Activated naive CD4-positive, alpha-beta T cell treated with anti-CD3 and anti-CD28 coated beads, Interleukin-2, amount 10 ng/mL, durations not matched to agents 7 days and 5 days (primary cell): ENCODE measurements at regions of chr2 and their contacts with region 1.

Region 1: DNA sequence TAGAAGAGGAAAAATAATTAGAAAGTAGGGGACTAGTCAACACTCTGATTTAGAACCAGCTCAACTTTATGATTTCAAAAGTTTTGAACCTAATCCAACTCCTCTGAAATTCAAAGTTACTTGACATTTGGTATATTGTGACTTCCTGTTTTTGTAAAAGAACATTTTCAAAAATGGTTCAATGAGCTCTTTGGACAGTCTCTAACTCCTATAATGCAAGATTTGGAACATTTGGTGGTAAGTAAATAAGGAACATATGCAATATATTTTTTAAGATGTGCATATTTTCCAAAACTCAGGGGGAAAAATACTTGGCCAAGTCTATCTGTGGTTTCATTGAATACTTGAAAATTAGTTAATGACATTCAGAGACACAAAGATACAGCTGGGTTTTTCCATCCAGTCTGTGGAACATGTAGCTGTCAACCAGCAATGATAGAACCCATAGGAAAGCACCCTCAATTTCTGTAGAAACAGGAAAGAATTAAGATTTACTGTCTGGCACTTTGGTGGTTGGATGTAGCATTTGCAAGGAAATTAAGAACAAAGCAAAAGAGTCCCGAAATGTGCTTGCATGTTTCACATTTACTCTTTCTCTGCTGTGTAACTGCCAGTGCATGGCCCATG is 17.0 kb upstream of the ANKRD44 start:
- DNase-seq: no peak
- H3K4me3 Mint-ChIP-seq: no peak overlapping the region
- H3K27ac Mint-ChIP-seq: peak overlapping the region; percentile 86
- H3K4me1 Mint-ChIP-seq: peaks cover 54% of the 10 kb centered on the region
- H3K27me3 Mint-ChIP-seq: no peaks in the 10 kb centered on the region

Region 2: DNA sequence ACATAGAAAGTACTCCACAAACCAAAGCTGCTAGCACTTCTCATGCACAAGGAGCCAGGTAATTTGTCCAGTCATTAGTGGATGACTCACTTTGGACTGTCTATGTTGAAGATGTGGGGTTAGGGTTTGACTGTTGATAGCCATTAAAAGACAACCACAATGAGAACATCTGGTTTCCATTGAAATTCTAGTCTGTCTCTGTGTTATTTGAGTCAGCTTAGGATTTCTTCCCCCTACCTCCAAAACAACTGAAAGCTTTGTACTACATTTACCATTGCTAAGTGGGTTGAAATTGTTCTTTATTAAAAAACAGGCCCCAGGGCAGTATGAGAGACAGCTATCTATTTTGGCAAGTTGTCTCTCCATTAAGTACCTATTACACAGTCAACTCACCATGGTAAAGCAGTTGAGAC is 33.2 kb after region 1 on chr2:
- CTCF ChIA-PET with region 1: interaction called, 17 read pairs
- DNase-seq: no peak
- H3K4me3 Mint-ChIP-seq: no peak overlapping the region
- H3K27ac Mint-ChIP-seq: no peak overlapping the region
- H3K4me1 Mint-ChIP-seq: peaks cover 17% of the 10 kb centered on the region
- H3K27me3 Mint-ChIP-seq: no peaks in the 10 kb centered on the region

Region 3: DNA sequence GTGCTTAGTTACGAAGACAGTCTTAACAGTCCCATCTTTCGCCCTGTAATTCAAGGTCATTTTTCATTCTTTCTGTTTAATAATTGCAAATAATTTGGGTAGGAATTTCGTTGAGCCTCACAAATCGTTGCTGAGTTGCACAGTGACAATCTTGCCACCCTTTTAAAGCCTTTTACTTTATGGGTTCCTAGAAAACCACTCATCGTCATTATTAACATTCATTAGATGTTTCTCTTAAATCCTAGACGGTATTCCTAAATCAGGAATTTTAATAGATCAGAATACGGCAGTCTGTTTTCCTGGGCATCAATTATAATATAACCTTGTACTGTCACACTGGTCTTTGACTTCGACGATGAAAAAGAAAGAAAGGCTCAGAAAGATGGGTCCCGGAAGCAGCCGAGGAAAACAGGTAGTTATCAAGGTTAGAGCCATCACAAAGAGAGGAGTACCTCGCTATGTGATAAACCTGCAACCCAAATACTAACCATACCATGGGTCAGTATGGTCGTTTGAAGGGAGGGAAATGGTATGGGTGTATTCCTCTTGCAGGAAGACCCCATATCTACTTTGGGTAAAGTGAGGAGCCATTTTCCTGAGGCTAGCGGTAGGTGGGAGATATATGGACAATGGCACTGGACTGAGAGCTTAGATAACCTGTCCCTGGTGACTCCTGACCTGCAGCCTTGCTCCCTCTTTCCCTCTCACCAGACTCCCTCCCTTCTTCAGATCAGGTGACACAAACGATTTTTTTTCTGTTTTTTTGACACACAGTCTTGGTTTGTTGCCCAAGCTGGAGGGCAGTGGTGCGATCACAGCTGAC is 108.2 kb after region 1 on chr2:
- CTCF ChIA-PET with region 1: no interaction called
- DNase-seq: no peak
- H3K4me3 Mint-ChIP-seq: peak overlapping the region; percentile 86
- H3K27ac Mint-ChIP-seq: peak overlapping the region; percentile 100
- H3K4me1 Mint-ChIP-seq: peaks cover 39% of the 10 kb centered on the region
- H3K27me3 Mint-ChIP-seq: peaks cover 4% of the 10 kb centered on the region